A549 (cell line): ENCODE measurements at regions of chr16 and their contacts with region 1.

Region 1: GRCh38 chr16:74862741-74863244 is 88.2 kb upstream of the FA2H start:
- DNase-seq: peak; percentile 63 to 69
- ATAC-seq: peak; percentile 88 to 89
- H3K4me3 ChIP-seq: no peak overlapping the region
- H3K27ac ChIP-seq: no peak overlapping the region
- H3K4me1 ChIP-seq: no peaks in the 10 kb centered on the region
- CTCF ChIP-seq: peak; percentile 97
- EP300 ChIP-seq: no peak
- POLR2A ChIP-seq: no peak
- RAD21 ChIP-seq: peak; percentile 94 to 98

Region 2: GRCh38 chr16:74650966-74651567 is 211.7 kb before region 1 on chr16:
- CTCF ChIA-PET with region 1: interaction called, 12 read pairs
- POLR2A ChIA-PET with region 1: interaction called, 3 read pairs
- DNase-seq: peak in 1 of 2 experiments; percentile 29
- ATAC-seq: peak in 1 of 2 experiments; percentile 53; a peak in 3 of 6 replicates
- H3K4me3 ChIP-seq: no peak overlapping the region
- H3K27ac ChIP-seq: no peak overlapping the region
- H3K4me1 ChIP-seq: no peaks in the 10 kb centered on the region
- CTCF ChIP-seq: peak; percentile 80
- EP300 ChIP-seq: no peak
- POLR2A ChIP-seq: no peak
- RAD21 ChIP-seq: peak in 1 of 2 experiments; percentile 20; a peak in 1 of 5 replicates

Region 3: DNA sequence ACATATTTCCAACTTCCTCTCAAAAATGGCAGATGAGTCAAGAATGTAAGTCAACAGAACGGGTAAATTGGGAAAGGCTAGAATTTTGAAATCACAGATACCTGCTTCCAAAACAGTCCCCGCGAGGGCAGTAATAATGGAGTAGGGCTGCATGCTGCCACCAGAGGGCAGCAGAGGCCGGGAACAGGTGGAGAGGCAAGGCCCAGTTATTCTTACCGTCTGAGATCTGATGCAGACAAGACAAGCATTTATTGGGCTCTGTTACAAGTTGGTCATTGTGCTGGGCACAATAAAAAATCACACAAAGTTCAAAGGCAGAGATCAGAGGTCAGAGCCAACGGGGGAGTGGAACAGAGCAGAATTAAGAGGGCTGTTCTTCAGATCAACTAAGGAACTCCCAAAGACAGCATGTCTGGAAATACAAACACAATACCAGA is 153.3 kb before region 1 on chr16:
- CTCF ChIA-PET with region 1: interaction called, 176 read pairs
- POLR2A ChIA-PET with region 1: no interaction called
- DNase-seq: peak; percentile 81 to 85
- ATAC-seq: peak; percentile 98
- H3K4me3 ChIP-seq: no peak overlapping the region
- H3K27ac ChIP-seq: peak overlapping the region; percentile 22 to 53; a peak in 4 of 6 replicates
- H3K4me1 ChIP-seq: peaks cover 7% of the 10 kb centered on the region; the same call in 2 of the 3 replicates
- CTCF ChIP-seq: peak; percentile 99
- EP300 ChIP-seq: no peak
- POLR2A ChIP-seq: no peak
- RAD21 ChIP-seq: peak; percentile 99

Region 4: DNA sequence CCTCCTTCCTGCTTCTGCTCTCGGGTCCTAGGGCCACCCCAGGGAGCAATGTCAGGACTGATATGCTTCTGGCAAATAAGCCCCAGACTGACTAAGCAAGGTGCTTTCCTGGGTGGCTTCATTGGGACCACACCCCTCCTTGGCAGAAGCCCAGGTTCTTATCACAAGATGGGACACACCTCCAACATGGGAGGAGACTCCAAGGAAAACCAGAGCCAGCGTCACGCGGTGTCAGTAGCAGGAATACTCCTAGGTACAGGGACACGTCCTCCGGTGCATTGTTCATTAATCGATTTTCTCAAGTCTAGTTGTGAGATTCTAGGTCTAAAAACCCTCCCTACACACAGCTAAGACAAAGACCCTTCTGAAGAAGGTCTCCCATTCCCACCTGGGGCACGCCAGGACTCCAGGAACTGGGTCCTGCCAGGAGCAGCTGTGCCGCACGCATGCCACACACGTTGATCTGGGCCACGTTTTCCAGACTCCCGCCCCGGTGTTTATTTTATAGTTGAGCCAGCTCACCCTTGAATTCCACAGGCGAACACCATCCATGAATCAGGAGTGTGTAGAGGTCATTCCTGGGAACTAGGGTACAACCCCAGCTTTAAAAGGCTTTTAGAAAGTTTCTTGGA is 119.0 kb before region 1 on chr16:
- CTCF ChIA-PET with region 1: interaction called, 43 read pairs
- POLR2A ChIA-PET with region 1: no interaction called
- DNase-seq: peak; percentile 98 to 99
- ATAC-seq: peak; percentile 84 to 86
- H3K4me3 ChIP-seq: peak overlapping the region; percentile 23; the same call in 1 of the 3 replicates
- H3K27ac ChIP-seq: peak overlapping the region; percentile 91
- H3K4me1 ChIP-seq: peaks cover 66% of the 10 kb centered on the region
- CTCF ChIP-seq: no peak
- EP300 ChIP-seq: peak; percentile 37 to 63; a peak in 2 of 5 replicates
- POLR2A ChIP-seq: peak; percentile 6; the same call in 1 of the 2 replicates
- RAD21 ChIP-seq: 0 out of 5 replicates have a peak, but pooled peaks of 1 of the 2 experiments have one; percentile 15

Region 5: DNA sequence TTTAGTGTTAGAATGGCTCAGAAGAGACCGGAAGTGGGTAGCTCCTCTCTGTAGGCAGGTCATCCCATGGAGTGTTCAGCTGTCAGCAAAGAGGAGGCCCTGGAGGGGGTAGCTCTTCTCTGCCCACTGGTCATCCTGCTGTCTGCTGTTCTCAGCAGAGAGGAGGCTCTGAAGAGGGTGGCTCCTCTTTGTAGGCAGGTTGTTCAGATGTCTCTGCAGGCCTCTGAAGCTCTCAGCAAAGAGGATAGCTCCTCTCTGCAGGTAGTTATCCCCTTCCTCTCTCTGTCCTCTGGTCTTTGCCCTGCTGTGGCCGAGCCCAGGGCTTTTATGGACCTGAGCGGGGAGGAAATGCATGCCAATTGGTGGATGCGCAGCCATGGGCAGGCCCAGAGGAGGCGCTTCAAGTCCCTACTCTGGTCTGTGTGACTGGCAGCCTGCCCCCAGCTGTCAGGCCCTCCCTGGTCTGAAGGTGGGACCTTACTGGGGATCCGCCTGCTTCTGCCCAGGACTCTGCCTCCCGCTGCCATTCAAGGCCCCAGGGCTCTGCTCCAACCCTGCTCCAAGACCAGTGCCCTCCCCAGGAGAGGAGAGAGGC is 55.6 kb before region 1 on chr16:
- CTCF ChIA-PET with region 1: interaction called, 161 read pairs
- POLR2A ChIA-PET with region 1: no interaction called
- DNase-seq: no peak
- ATAC-seq: no peak
- H3K4me3 ChIP-seq: no peak overlapping the region
- H3K27ac ChIP-seq: no peak overlapping the region
- H3K4me1 ChIP-seq: no peaks in the 10 kb centered on the region
- CTCF ChIP-seq: no peak
- EP300 ChIP-seq: no peak
- POLR2A ChIP-seq: no peak
- RAD21 ChIP-seq: no peak

Region 6: GRCh38 chr16:74843719-74844433 is 18.9 kb before region 1 on chr16:
- CTCF ChIA-PET with region 1: interaction called, 33 read pairs
- POLR2A ChIA-PET with region 1: no interaction called
- DNase-seq: no peak
- ATAC-seq: peak; percentile 24 to 27; a peak in 2 of 6 replicates
- H3K4me3 ChIP-seq: no peak overlapping the region
- H3K27ac ChIP-seq: no peak overlapping the region
- H3K4me1 ChIP-seq: no peaks in the 10 kb centered on the region
- CTCF ChIP-seq: no peak
- EP300 ChIP-seq: no peak
- POLR2A ChIP-seq: no peak
- RAD21 ChIP-seq: no peak

Region 7: DNA sequence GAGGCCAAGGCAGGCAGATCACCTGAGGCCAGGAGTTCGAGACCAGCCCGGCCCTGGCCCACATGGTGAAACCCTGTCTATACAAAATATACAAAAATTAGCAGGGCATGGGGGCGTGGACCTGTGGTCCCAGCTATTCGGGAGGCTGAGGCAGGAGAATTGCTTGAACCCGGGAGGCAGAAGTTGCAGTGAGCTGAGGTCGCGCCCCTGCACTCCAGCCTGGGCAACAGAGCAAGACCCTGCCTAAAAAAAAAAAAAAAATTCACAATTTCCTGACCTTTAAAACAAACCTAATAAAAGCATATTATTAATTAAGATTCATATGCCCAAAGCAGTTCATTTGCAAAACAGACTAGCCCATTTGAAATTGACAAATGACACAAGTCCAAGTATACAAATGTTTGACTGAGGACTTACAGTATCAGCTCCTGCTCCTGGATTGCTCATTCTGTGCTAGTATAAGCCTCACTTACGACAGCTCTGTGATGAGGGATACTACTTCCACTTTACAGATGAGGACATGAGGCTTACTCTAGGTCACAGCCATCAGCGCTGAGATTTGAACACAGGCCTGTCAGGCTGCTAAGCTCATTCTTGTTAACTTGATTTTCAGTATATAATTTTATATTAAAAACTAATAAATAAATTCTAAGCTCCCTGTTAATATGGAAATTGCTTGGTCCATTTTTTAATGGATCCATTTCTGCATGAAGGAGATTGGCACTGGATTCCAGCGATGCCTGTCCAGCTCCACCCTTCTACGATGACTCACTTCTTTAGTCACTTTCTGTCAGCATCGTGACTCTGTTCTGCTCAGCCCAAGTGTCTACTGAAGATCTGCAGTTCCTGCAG is 33.8 kb after region 1 on chr16:
- CTCF ChIA-PET with region 1: interaction called, 11 read pairs
- POLR2A ChIA-PET with region 1: no interaction called
- DNase-seq: peak; percentile 55 to 60
- ATAC-seq: peak; percentile 91 to 92
- H3K4me3 ChIP-seq: no peak overlapping the region
- H3K27ac ChIP-seq: no peak overlapping the region
- H3K4me1 ChIP-seq: peaks cover 10% of the 10 kb centered on the region
- CTCF ChIP-seq: no peak
- EP300 ChIP-seq: no peak
- POLR2A ChIP-seq: no peak
- RAD21 ChIP-seq: no peak

Region 8: GRCh38 chr16:74951681-74952080 is 88.9 kb after region 1 on chr16:
- CTCF ChIA-PET with region 1: no interaction called
- POLR2A ChIA-PET with region 1: no interaction called
- DNase-seq: no peak
- ATAC-seq: no peak
- H3K4me3 ChIP-seq: no peak overlapping the region
- H3K27ac ChIP-seq: no peak overlapping the region
- H3K4me1 ChIP-seq: no peaks in the 10 kb centered on the region
- CTCF ChIP-seq: no peak
- EP300 ChIP-seq: no peak
- POLR2A ChIP-seq: no peak
- RAD21 ChIP-seq: no peak